SK-N-SH (cell line): ENCODE measurements at regions of chr18 and their contacts with region 1.

Region 1: DNA sequence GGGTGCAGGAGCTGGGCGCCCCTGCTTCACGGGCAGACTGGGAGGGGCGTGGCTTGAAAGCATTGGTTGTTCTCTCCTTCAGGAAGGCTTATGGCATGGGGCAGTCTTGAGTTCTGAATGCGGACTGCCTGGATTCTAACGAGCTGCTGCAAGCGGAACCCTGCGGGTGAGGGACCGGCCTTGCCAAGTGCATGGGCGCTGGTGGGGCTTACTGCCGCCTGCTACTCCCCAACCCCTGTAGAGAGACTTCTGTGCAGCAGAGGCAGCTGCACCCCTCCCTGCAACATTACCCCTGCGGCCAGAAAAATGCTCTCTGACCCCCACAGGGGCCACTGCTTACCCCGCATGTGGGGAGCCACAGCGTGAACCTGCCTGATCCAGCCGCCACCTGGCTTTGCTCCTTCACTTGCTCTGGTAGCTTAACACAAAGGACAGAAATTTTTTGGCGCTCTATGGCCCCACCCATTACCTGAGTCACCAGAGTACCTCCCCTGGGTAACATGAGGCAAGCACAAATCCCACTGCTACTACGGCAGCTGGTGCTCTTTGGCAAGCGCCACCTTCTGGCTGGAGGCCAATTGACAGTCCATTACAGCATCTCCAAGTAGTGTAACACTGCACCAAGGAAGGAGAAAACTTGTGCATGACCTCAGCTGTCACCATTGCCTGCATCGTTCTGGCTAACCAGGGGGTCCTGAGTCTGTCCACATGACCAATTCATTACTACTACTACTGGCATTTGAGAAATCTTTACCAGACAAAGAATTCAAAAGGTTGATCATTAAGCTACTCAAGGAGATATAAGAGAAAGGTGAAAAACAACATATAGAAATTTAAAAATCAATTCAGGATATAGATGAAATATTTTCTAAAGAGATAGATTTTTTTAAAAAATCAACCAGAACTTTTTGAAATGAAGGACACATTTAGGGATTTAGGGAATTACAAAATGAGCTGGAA is 35.4 kb downstream of the MYL12B start:
- DNase-seq: peak; percentile 75
- H3K4me3 ChIP-seq: peak overlapping the region; percentile 79 to 88
- H3K27ac ChIP-seq: peak overlapping the region; percentile 65 to 81
- H3K4me1 ChIP-seq: peaks cover 0 to 4% of the 10 kb centered on the region in 2 experiments; a peak in 1 of 4 replicates
- H3K27me3 ChIP-seq: no peaks in the 10 kb centered on the region
- CTCF ChIP-seq: peak; percentile 84
- EP300 ChIP-seq: no peak; a peak in 1 of 4 replicates
- RAD21 ChIP-seq: peak; percentile 47

Region 2: DNA sequence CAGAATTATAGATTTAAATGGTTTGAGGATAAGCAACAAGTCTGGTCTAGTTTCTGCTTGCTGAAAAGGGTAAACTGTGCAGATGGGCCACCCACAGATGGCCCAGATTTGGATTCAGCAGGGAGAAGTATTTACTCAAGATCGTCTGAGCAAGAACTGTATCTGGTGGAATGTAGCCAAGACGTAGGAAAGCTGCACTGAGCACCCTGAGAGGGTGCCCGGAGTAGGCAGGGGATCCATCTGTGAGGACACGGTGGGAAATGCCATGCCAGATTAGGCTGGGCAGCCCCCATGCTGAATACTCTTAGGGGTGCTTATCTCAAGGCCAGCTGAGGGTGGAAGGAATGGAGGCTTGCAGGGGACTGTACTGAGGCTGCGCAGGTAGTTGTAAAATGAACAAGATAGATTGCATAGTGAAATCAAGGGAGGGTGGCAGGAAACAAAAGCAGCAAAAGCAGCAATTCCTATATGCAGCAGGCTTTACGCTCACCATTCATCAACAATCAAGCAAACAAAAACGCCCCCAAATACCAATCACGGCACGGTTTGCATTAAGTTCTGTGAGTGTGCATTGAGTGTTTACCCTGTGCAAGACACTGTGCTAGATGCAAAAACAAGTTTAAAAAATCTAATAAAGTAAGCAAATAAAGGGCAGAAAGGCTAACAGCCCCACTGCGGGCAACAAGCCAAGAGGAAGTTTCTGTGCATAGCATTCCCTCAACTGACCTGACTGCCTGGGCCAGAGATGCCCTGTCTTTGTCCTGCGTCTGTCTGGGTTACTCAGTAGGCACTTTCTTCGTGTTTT is 252.2 kb before region 1 on chr18:
- CTCF ChIA-PET with region 1: no interaction called
- POLR2A ChIA-PET with region 1: no interaction called
- DNase-seq: no peak
- H3K4me3 ChIP-seq: no peak overlapping the region
- H3K27ac ChIP-seq: no peak overlapping the region
- H3K4me1 ChIP-seq: peaks cover 0 to 9% of the 10 kb centered on the region in 2 experiments; a peak in 1 of 4 replicates
- H3K27me3 ChIP-seq: no peaks in the 10 kb centered on the region
- CTCF ChIP-seq: no peak
- EP300 ChIP-seq: no peak
- RAD21 ChIP-seq: no peak

Region 3: GRCh38 chr18:3135536-3135935 is 161.8 kb before region 1 on chr18:
- CTCF ChIA-PET with region 1: no interaction called
- POLR2A ChIA-PET with region 1: no interaction called
- DNase-seq: no peak
- H3K4me3 ChIP-seq: no peak overlapping the region
- H3K27ac ChIP-seq: no peak overlapping the region
- H3K4me1 ChIP-seq: no peaks in the 10 kb centered on the region
- H3K27me3 ChIP-seq: no peaks in the 10 kb centered on the region
- CTCF ChIP-seq: no peak
- EP300 ChIP-seq: no peak
- RAD21 ChIP-seq: no peak

Region 4: DNA sequence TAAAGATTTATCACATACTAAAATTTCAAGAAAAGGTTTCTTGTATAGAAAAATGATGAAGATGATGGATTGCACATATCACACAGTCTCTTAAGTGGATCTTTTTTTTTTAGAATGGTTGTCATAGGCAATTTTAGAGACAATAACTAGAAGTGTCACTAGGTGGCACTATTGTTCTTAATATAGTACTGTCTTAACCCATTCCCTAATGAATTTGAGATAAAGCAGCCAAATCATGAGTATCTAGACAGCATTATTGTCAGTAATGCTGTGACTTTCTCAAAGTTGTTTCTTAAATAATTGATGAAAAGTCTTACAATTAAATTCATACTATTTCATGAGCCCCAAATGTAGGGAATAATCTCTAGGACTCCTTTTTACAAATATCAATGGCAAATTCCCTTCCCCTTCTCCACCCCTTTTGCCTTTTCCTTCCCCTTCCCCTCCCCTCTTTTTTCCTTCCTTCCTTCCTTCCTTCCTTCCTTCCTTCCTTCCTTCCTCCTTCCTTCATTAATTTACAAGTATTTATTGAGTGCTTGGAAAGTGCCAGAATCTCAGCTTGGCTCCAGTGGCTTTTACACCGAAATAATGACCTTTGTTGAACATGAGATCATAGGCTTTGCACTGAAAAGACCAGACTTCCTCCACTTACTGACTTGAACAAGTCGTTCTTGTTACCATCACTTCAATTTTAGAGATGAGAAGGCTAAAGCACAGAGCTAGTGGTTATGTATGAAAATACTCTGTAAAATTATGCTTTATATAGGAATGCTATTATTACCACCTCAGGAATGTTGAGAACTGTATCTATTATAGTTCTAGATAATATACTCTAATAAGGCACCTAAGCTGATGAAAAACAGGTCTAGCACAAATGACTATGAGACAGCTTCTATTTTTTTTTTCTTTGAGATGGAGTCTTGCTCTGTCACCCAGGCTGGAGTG is 15.6 kb before region 1 on chr18:
- CTCF ChIA-PET with region 1: interaction called, 22 read pairs
- POLR2A ChIA-PET with region 1: interaction called, 6 read pairs
- DNase-seq: peak; percentile 59
- H3K4me3 ChIP-seq: no peak overlapping the region; a peak in 1 of 4 replicates
- H3K27ac ChIP-seq: peak overlapping the region; percentile 30 to 53; a peak in 3 of 4 replicates
- H3K4me1 ChIP-seq: peaks cover 4 to 25% of the 10 kb centered on the region in 2 experiments; a peak in 3 of 4 replicates
- H3K27me3 ChIP-seq: no peaks in the 10 kb centered on the region
- CTCF ChIP-seq: peak; percentile 71
- EP300 ChIP-seq: no peak
- RAD21 ChIP-seq: peak; percentile 89

Region 5: DNA sequence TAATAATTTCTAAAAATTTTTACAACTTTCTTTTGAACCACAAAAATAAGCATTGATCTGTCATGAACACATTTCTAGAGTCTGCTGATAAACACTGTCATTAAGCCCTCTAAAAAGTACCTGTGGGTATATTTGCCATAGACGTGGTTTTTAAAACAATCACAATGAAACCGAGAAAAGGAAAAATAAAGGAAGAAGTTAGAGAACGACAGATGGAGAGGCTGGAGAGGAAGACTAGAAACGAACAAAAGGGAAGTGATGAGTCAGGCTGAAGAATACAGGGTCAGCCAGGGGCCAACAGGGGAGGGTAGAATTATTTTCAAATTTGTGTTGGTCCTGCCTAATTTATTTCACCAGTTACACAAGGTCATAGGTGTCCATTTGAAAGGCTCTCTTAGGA is 26.6 kb after region 1 on chr18:
- CTCF ChIA-PET with region 1: interaction called, 28 read pairs
- POLR2A ChIA-PET with region 1: no interaction called
- DNase-seq: no peak
- H3K4me3 ChIP-seq: no peak overlapping the region
- H3K27ac ChIP-seq: peak overlapping the region; percentile 16 to 54; a peak in 3 of 4 replicates
- H3K4me1 ChIP-seq: peaks cover 15 to 37% of the 10 kb centered on the region in 2 experiments; a peak in 3 of 4 replicates
- H3K27me3 ChIP-seq: no peaks in the 10 kb centered on the region
- CTCF ChIP-seq: no peak
- EP300 ChIP-seq: no peak
- RAD21 ChIP-seq: no peak

Region 6: DNA sequence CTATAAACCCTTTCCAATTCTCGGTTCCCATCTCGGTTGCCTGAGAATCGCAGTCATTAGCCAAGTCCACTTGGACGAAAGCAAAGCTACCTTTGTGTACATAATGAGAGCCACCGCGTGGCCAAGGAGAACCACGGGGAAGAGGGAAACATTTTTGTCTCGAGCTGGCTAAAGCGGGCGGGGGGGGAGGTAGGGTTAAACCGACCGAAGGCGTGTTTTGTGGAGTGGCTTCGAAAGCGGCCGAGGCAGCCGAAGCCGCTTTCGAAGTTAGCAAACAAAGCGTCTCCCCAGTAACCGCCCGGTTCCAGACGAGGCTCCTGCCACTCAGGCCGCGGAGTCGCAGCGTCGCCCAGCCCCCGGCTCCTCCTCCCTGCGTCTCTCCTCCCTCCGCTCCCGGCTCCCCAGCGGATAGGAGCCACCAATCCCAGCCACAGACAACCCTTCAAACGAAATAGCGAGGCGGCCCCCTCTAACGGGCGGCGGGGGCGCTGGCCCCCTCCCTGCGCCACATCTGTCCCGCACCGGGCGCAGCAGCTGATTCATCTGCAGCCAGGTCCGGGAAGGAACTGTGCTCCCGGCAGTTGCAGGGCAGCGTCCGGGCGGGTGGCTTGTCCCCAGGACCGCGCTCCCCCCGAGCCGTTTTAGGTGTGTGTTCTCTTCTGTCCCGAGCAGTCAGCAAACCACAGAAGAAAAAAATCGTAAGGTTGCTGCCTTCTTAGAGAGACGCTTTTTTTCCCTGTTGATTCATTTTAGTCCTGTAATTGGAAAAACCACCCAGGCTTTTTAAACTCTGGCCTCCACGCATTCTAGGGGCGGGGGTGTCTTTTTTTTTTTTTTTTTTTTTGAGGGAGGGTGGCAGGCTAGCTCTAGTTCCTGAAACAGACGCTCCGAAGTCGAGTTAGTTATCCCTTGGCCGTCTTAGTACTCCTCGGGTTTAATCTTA is 150.9 kb after region 1 on chr18:
- CTCF ChIA-PET with region 1: interaction called, 10 read pairs
- POLR2A ChIA-PET with region 1: no interaction called
- DNase-seq: peak; percentile 88
- H3K4me3 ChIP-seq: peak overlapping the region; percentile 74 to 93
- H3K27ac ChIP-seq: peak overlapping the region; percentile 98 to 99
- H3K4me1 ChIP-seq: peaks cover 15 to 20% of the 10 kb centered on the region in 2 experiments
- H3K27me3 ChIP-seq: no peaks in the 10 kb centered on the region
- CTCF ChIP-seq: peak; percentile 26
- EP300 ChIP-seq: peak; percentile 36 to 84; a peak in 3 of 4 replicates
- RAD21 ChIP-seq: no peak; the same call in none of the 2 replicates

Region 7: DNA sequence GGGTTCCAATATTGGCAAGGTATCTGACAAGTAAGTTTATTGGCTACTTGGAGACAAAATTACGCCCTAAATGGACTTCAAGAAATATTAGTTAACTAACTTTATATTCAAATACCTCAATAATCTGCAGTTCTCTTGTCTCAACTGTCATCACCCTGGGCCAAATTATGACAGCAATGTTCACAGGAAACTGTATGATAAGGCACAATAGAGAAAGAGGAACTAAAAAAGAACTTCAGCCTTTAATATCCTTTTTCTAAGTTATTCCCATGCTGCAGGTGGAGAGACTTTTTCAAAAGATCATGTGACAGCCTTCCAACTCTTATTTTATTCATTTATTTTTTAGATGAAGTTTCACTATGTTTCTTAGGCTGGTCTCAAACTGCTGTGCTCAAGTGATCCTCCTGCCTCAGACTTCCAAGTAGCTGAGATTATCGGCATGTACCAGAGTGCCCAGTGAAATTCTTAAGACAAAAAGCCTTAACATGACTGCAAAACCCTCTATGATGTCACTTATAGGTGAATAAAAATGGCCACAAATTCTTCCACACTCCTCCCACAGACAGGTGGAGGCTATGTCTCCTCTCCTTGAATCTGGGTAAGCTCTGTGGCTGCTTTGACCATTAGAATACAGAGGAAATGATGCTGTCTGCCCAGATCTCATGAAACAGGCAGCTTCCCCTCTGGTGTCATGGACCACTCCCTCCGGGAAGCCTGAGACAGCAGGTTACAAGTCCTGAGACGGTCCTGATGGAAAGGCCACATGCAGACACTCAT is 363.6 kb after region 1 on chr18:
- CTCF ChIA-PET with region 1: interaction called, 36 read pairs
- POLR2A ChIA-PET with region 1: no interaction called
- DNase-seq: no peak
- H3K4me3 ChIP-seq: no peak overlapping the region
- H3K27ac ChIP-seq: no peak overlapping the region
- H3K4me1 ChIP-seq: peaks cover 3 to 12% of the 10 kb centered on the region in 2 experiments; a peak in 2 of 4 replicates
- H3K27me3 ChIP-seq: no peaks in the 10 kb centered on the region
- CTCF ChIP-seq: no peak
- EP300 ChIP-seq: no peak
- RAD21 ChIP-seq: no peak